ENCODE measurements at regions of chr2 and their contacts with region 1.

Region 1: GRCh38 chr2:8594731-8595427 is 87.0 kb upstream of the ID2 start:
- DNase-seq: no peak
- ATAC-seq: no peak

Region 2: DNA sequence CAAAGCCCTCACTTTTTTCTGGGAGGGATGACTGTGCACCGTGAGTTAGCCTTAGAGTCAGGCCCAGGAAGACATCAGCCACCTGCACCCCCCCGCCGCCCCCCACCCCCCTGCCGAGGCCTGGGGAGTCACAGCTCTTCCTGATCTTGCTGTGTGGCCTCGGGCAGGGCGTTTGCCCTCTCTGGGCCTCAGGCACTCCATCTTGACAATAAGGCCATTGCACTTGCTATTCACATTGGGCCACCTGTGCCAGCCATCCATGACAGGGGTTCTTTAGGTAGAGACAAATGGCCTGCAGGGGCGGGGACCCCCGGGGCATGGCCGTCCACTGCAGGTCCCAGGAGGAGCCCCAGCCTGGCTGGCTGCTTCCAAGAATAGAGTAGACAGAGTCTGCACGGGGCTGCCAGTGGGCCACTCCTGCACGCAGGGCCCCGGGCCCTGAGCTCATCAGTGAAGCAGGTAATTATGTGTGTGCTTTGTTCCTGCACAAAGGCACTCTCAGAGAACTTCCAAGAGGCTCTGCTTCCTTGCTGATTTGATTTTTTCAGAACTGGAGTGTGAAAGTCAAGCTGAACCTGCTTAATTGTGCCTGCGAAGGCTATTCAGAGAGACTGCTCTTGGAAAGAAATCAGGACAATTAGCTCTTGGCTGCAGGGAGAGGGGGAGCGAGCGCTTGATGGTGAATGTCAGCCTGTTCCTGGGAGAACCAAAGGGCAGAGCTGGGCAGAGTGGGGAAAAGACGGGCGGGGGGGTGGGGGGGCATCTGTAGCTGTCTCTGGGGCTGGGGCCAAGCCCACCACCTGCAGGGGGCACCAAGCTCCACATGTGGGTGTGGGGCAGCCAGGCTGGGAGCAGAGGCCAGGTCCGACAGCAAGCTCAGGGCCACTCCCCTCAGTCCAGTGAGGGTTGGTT is 1568.0 kb after region 1 on chr2:
- intact Hi-C with region 1: loop called (anchors 5 kb)
- DNase-seq: no peak
- ATAC-seq: no peak